GM12878 (cell line): ENCODE measurements at regions of chr16 and their contacts with region 1.

Region 1: DNA sequence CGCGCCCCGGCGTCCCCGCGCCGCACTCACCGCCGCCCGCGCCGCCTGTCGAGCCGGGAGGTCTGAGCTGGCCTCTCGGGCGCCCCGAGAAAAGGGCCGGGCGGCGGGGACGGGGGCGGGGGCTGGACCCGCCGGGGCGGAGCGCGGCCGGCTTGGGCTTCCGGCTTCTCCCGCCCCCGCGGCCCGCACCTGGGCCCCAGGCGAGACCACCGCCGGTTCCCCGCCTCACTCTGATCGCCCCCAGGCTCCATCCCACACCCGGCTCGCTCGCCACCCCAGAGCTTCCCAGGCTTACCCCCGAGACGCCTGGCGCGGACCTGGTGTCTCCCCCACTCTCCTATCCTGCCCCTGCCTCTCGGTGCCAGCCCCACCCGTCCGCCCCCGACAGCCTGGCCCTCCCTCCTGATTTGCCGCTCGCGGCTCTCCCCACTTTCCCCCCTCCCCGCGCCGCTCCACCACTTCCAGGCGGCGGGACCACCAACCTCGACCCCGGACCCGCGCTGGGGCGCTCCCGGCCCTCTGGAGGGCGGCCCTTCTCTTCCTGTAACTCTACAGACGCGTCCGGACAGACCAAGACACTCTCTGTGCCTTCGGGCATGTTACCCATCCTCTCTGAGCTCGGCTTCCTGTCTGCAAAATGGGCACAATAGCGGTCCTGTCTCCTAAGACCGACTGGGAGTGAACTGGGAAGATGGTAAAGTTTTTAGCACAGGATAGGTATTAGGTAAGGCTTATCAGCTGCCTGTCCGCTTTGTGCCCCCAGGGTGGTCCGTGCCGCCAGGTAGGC is at the start of gene LITAF:
- DNase-seq: no peak
- ATAC-seq: peak; percentile 78
- H3K4me3 ChIP-seq: peak within 1 kb of the TSS; percentile 97
- H3K27ac ChIP-seq: peak within 1 kb of the TSS; percentile 92
- H3K4me1 ChIP-seq: peaks cover 10% of the 10 kb centered on the region; the same call in 1 of the 2 replicates
- H3K27me3 ChIP-seq: no peaks in the 10 kb centered on the region
- CTCF ChIP-seq: peak in 1 of 3 experiments; percentile 19; a peak in 1 of 6 replicates
- EP300 ChIP-seq: no peak
- POLR2A ChIP-seq: peak; percentile 81
- RAD21 ChIP-seq: peak; percentile 33; the same call in 1 of the 2 replicates
- polyA plus RNA-seq, gene LITAF: 144 to 195 TPM

Region 2: DNA sequence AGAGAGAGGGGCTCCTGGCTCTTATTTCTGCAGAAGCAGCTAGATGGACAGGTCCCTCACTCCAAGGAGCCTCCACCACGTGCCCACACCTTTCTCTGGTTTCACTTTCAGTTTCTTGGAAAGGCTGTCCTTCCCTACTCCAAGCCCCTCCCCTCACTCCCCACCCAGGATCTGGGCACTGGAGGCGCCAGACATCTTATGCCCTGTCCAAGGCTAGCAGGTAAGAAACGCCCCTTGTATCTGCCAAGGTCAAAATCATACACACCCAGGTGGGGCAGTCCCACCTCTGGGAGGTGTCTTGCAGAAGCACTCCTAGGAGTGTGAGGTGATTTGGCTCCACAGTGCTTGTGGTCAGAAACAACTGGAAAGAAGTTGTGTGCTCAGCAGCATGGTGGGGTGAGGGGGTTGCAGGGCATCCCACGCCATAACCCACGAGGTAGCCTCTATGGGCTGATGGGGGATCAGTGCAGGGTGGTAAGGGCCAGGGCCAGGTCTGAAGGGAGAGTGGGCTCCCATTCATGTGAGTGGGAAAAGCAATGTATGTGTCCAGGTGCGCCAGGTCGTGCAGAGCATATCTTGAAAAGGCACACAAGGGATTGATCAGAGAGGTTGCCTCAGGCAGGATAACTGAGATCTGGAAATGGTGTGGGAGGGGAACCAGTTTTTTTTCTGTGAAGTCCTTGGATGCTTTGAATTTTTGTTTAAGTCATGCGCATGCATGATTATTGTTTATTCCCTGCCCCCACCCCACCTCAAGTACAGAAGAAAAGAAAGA is 274.1 kb before region 1 on chr16:
- CTCF ChIA-PET with region 1: no interaction called
- POLR2A ChIA-PET with region 1: no interaction called
- RAD21 ChIA-PET with region 1: no interaction called
- SMC1A ChIA-PET with region 1: no interaction called
- in situ Hi-C with region 1: no loop called
- intact Hi-C with region 1: no loop called
- DNase-seq: no peak
- ATAC-seq: no peak
- H3K4me3 ChIP-seq: no peak overlapping the region
- H3K27ac ChIP-seq: no peak overlapping the region; the same call in 1 of the 2 replicates
- H3K4me1 ChIP-seq: peaks cover 57% of the 10 kb centered on the region
- H3K27me3 ChIP-seq: no peaks in the 10 kb centered on the region; a peak in 1 of 4 replicates
- CTCF ChIP-seq: no peak
- EP300 ChIP-seq: no peak
- POLR2A ChIP-seq: no peak
- RAD21 ChIP-seq: no peak

Region 3: GRCh38 chr16:11667824-11668622 is 81.0 kb after region 1 on chr16 and contains the start of gene SNN:
- CTCF ChIA-PET with region 1: no interaction called
- POLR2A ChIA-PET with region 1: interaction called, 6 read pairs
- RAD21 ChIA-PET with region 1: interaction called, 21 read pairs
- SMC1A ChIA-PET with region 1: interaction called, 4 read pairs
- in situ Hi-C with region 1: no loop called
- intact Hi-C with region 1: loop called (anchors 5 kb)
- DNase-seq: no peak
- ATAC-seq: peak; percentile 70
- H3K4me3 ChIP-seq: peak within 1 kb of the TSS; percentile 67
- H3K27ac ChIP-seq: peak within 1 kb of the TSS; percentile 88
- H3K4me1 ChIP-seq: peaks cover 45% of the 10 kb centered on the region
- H3K27me3 ChIP-seq: no peaks in the 10 kb centered on the region
- CTCF ChIP-seq: no peak
- EP300 ChIP-seq: no peak
- POLR2A ChIP-seq: peak; percentile 59; the same call in 1 of the 2 replicates
- RAD21 ChIP-seq: no peak
- polyA plus RNA-seq, gene SNN: 2.2 to 5.2 TPM

Region 4: DNA sequence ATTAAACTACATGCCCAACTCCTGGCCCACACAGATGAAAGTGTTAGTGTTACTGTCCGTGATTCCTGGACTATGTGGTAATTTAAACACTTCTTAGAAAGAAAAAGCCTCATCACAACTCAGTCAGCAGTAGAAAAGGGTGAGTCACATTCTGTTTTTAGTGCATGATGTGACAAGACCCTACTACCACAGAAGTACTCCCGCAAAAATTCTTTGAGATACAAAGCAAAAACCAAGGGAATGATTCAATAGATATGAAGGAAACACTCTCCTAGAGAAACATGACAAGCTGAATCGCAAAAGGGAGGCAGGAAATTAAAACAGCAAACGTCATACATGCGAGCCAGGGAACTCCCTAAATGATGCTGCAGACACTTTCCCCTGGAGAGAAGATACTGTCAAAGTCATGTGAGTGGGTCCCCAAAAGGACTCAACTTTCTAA is 95.6 kb after region 1 on chr16:
- CTCF ChIA-PET with region 1: no interaction called
- POLR2A ChIA-PET with region 1: no interaction called
- RAD21 ChIA-PET with region 1: interaction called, 12 read pairs
- SMC1A ChIA-PET with region 1: interaction called, 8 read pairs
- in situ Hi-C with region 1: no loop called
- intact Hi-C with region 1: no loop called
- DNase-seq: no peak
- ATAC-seq: peak; percentile 39
- H3K4me3 ChIP-seq: peak overlapping the region; percentile 0; the same call in 1 of the 2 replicates
- H3K27ac ChIP-seq: peak overlapping the region; percentile 67
- H3K4me1 ChIP-seq: peaks cover 83% of the 10 kb centered on the region
- H3K27me3 ChIP-seq: no peaks in the 10 kb centered on the region
- CTCF ChIP-seq: no peak
- EP300 ChIP-seq: no peak
- POLR2A ChIP-seq: no peak
- RAD21 ChIP-seq: no peak